Mammary epithelial cell (primary cell): ENCODE measurements at regions of chr18 and their contacts with region 1.

Region 1: DNA sequence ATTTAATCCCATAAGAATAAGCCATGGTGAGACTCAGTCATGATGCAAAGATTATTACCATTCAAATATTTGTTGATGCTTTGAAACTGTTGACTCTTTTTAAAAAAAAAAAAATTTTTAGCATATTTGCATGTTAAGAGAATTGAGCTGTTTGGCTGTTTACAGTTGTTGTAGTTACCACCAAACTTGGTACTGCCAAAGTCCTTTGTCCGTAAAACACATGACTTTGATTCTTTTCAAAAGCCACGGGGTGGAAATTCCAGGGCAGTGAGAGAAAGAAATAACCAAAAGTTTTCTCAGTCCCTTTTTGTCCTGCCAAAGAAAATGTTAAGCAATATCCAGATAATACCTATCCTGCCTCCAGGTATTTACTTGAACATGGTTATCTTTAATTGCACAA is 474.8 kb downstream of the METTL4 start:
- DNase-seq: peak; percentile 39
- H3K4me3 ChIP-seq: no peak overlapping the region
- H3K27ac ChIP-seq: no peak overlapping the region
- H3K4me1 ChIP-seq: peaks cover 3% of the 10 kb centered on the region
- H3K27me3 ChIP-seq: no peaks in the 10 kb centered on the region
- CTCF ChIP-seq: no peak

Region 2: GRCh38 chr18:2559249-2559648 is 462.7 kb after region 1 on chr18:
- CTCF ChIA-PET with region 1: no interaction called
- dilution Hi-C with region 1: no loop called
- in situ Hi-C with region 1: loop called in 1 of 2 experiments (anchors 10 kb)
- intact Hi-C with region 1: no loop called
- DNase-seq: no peak
- H3K4me3 ChIP-seq: no peak overlapping the region
- H3K27ac ChIP-seq: no peak overlapping the region
- H3K4me1 ChIP-seq: no peaks in the 10 kb centered on the region
- H3K27me3 ChIP-seq: no peaks in the 10 kb centered on the region
- CTCF ChIP-seq: no peak